Ascending aorta (tissue), 2 donors: ENCODE measurements at regions of chr5 and their contacts with region 1.

Region 1: DNA sequence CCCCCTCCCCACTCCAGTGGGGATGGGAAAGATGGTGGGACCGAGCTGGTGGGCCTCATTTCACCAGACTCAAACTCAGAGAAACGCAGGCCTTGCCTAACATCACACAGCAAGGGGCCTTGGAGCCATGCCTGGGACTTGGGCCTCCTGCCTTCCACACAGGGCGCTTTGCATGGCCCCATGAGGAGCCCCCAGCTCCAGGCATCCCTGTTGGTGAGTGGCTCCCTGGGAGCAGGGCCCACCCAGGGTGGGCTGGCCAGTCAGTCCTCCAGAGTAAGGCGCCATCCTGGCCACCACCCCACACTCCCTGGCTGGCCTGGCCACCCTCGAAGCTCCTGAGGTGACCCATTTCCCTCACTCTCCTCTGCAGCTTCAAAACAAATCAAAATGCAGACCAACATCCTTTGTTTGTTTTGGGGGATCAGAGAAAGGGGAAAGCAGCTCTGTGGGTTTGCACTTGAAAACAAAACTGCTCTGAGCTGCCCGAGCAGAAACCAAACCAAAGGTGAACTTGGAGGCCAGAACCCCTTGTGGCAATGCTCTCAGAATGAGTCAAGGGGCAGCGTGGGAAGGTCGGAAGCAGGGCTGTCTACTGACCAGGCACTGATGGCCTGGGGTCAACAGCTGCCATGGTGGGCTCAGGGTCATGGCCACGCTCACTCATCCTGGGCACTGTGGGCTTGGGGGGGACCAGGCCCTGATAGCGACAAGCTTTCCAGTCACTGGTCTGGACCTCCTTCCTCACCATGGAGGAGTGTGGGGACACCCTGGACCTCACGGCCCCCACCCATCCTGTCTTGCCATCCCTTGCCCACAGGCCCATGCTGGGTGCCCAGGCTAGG is 37.0 kb upstream of the VDAC1 start:
- DNase-seq: no peak
- H3K4me3 ChIP-seq: no peak overlapping the region
- H3K27ac ChIP-seq: no peak overlapping the region
- H3K4me1 ChIP-seq: no peaks in the 10 kb centered on the region
- H3K27me3 ChIP-seq: no peaks in the 10 kb centered on the region
- CTCF ChIP-seq: no peak

Region 2: GRCh38 chr5:134101686-134102439 is 60.1 kb after region 1 on chr5:
- intact Hi-C with region 1: loop called (anchors 5 kb)
- DNase-seq: no peak
- H3K4me3 ChIP-seq: no peak overlapping the region
- H3K27ac ChIP-seq: no peak overlapping the region
- H3K4me1 ChIP-seq: peaks cover 3 to 17% of the 10 kb centered on the region in 2 donors
- H3K27me3 ChIP-seq: no peaks in the 10 kb centered on the region
- CTCF ChIP-seq: peak; percentile 74 to 86 (median 86)

Region 3: GRCh38 chr5:134140530-134141201 is 98.9 kb after region 1 on chr5:
- intact Hi-C with region 1: loop called (anchors 1 kb)
- DNase-seq: no peak
- H3K4me3 ChIP-seq: no peak overlapping the region
- H3K27ac ChIP-seq: no peak overlapping the region
- H3K4me1 ChIP-seq: no peaks in the 10 kb centered on the region
- H3K27me3 ChIP-seq: no peaks in the 10 kb centered on the region
- CTCF ChIP-seq: peak; percentile 61 to 72 (median 62)

Region 4: GRCh38 chr5:134145779-134146581 is 104.2 kb after region 1 on chr5:
- intact Hi-C with region 1: loop called (anchors 1 kb)
- DNase-seq: peak in 1 of 2 donors; percentile 85
- H3K4me3 ChIP-seq: no peak overlapping the region
- H3K27ac ChIP-seq: no peak overlapping the region
- H3K4me1 ChIP-seq: no peaks in the 10 kb centered on the region
- H3K27me3 ChIP-seq: no peaks in the 10 kb centered on the region
- CTCF ChIP-seq: peak; percentile 79 to 97 (median 91)

Region 5: GRCh38 chr5:134289509-134290113 is 247.8 kb after region 1 on chr5:
- intact Hi-C with region 1: loop called (anchors 10 kb)
- DNase-seq: peak in 1 of 2 donors; percentile 66
- H3K4me3 ChIP-seq: no peak overlapping the region
- H3K27ac ChIP-seq: no peak overlapping the region
- H3K4me1 ChIP-seq: no peaks in the 10 kb centered on the region
- H3K27me3 ChIP-seq: no peaks in the 10 kb centered on the region
- CTCF ChIP-seq: peak; percentile 47 to 71 (median 57)

Region 6: DNA sequence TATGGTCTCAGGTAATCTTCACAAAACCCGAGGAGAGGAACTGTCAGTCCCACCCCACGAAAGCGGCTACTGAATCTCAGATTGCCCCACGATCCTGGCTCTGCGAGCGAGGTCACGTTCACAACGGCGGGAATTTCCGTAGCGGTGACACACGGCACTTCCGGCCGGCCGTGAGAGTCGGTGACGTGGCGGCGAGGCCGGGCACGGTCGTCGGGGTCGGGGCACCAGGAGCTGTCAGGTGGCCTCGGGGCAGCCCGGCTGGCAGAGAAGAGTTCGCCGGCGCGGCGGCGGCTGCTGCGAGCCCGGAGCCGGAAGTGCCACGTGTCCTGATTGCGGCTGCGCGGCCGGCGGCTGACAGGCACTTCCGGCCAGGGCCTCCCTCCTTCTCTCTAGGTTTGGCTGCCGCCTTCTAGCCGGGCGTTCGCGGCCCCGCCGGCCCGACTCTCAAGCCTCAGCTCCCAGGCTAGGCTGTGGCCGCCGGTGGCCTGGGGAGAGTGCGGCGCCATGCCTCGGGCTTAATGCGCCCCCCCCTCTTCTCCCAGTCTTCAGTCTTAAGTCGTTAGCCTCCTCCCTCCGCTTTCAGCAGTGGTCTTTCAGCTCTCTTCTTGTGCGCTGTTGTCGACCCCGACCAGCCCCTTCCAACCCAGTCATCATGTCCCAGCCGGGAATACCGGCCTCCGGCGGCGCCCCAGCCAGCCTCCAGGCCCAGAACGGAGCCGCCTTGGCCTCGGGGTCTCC is 606.8 kb after region 1 on chr5 and contains the start of gene SEC24A:
- intact Hi-C with region 1: no loop called
- DNase-seq: peak; percentile 75 to 96
- H3K4me3 ChIP-seq: peak within 1 kb of the TSS; percentile 79 to 86
- H3K27ac ChIP-seq: peak within 1 kb of the TSS; percentile 97 to 98
- H3K4me1 ChIP-seq: peaks cover 4 to 15% of the 10 kb centered on the region in 2 donors
- H3K27me3 ChIP-seq: no peaks in the 10 kb centered on the region
- CTCF ChIP-seq: no peak
- total RNA-seq, gene SEC24A: 21.2 TPM